PC-9 (cell line): ENCODE measurements at regions of chr16 and their contacts with region 1.

Region 1: DNA sequence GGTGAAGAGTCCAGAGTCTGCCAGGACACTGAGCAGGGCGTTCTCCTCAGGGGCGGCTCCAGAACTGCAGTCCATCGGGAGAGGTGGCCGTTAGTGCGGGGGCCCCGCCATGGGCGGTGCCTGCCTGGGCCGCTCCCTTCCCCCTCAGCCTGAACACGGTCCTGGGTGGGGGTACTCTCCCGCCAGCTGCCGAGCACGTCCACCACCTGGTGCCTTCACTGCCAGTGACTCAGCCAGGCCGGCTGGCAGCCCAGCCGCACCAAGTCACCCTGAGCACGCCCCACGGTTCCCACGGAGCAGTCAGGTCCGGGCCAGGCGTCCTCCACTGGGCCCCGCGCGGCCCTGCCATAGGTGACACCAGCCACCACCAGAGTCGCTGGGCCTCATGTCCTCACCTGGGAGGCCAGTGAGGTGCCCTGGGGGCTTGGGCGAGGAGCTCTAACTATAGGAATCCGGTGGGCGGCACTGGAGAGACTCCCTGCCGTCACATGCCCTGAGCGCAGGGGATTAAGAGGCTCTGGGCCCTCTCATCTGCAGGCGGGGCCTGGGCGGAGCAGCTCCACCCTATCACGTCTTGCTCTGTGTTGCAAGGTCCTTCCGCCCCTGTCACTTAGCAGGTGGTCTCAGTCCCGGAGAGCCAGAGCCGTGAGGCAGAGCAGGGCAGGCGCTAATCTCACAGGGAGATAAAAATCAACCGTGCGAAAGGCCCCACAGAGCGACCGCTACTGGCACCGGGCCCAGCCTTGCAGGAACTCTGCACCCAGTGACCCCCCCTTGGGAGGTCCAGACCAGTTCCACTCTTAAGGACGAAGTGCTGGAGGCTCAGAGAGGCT is 14.3 kb downstream of the PIEZO1 start:
- DNase-seq: peak; percentile 92 to 96
- H3K4me3 ChIP-seq: peak overlapping the region; percentile 48; the same call in 1 of the 2 replicates
- H3K27ac ChIP-seq: peak overlapping the region; percentile 71
- H3K4me1 ChIP-seq: peaks cover 90% of the 10 kb centered on the region
- H3K27me3 ChIP-seq: no peaks in the 10 kb centered on the region
- CTCF ChIP-seq: no peak

Region 2: GRCh38 chr16:87702325-87702811 is 1068.3 kb before region 1 on chr16:
- CTCF ChIA-PET with region 1: no interaction called
- POLR2A ChIA-PET with region 1: no interaction called
- intact Hi-C with region 1: no loop called
- DNase-seq: no peak
- H3K4me3 ChIP-seq: no peak overlapping the region
- H3K27ac ChIP-seq: no peak overlapping the region
- H3K4me1 ChIP-seq: no peaks in the 10 kb centered on the region
- H3K27me3 ChIP-seq: no peaks in the 10 kb centered on the region
- CTCF ChIP-seq: peak; percentile 41; the same call in 1 of the 2 replicates

Region 3: GRCh38 chr16:88785106-88785924 is 14.6 kb after region 1 on chr16 and contains the start of gene PIEZO1:
- CTCF ChIA-PET with region 1: interaction called, 4 read pairs
- POLR2A ChIA-PET with region 1: interaction called, 17 read pairs
- intact Hi-C with region 1: loop called (anchors 1 kb)
- DNase-seq: peak in 1 of 2 experiments; percentile 71
- H3K4me3 ChIP-seq: peak within 1 kb of the TSS; percentile 71
- H3K27ac ChIP-seq: peak within 1 kb of the TSS; percentile 74
- H3K4me1 ChIP-seq: peaks cover 31% of the 10 kb centered on the region
- H3K27me3 ChIP-seq: no peaks in the 10 kb centered on the region
- CTCF ChIP-seq: peak; percentile 87
- total RNA-seq, gene PIEZO1: 391 and 426 TPM in 2 replicates

Region 4: GRCh38 chr16:88803264-88803987 is 32.7 kb after region 1 on chr16 and contains the start of gene CDT1:
- CTCF ChIA-PET with region 1: no interaction called
- POLR2A ChIA-PET with region 1: interaction called, 20 read pairs
- intact Hi-C with region 1: loop called (anchors 2 kb)
- DNase-seq: peak in 1 of 2 experiments; percentile 89
- H3K4me3 ChIP-seq: peak within 1 kb of the TSS; percentile 82
- H3K27ac ChIP-seq: peak within 1 kb of the TSS; percentile 58
- H3K4me1 ChIP-seq: peaks cover 15% of the 10 kb centered on the region
- H3K27me3 ChIP-seq: no peaks in the 10 kb centered on the region
- CTCF ChIP-seq: no peak
- total RNA-seq, gene CDT1: 73.2 and 95.4 TPM in 2 replicates